ENCODE measurements at regions of chr14 and their contacts with region 1.

Region 1: GRCh38 chr14:70934502-70935134 is 27.4 kb downstream of the PCNX1 start:
- DNase-seq: peak; percentile 34
- ATAC-seq: peak; percentile 90
- H3K4me3 ChIP-seq: peak overlapping the region; percentile 38; the same call in 1 of the 2 replicates
- H3K27ac ChIP-seq: peak overlapping the region; percentile 56
- H3K4me1 ChIP-seq: peaks cover 14% of the 10 kb centered on the region; the same call in 1 of the 2 replicates
- H3K27me3 ChIP-seq: no peaks in the 10 kb centered on the region
- CTCF ChIP-seq: no peak
- EP300 ChIP-seq: no peak
- POLR2A ChIP-seq: no peak
- RAD21 ChIP-seq: no peak

Region 2: GRCh38 chr14:70887207-70887681 is 47.4 kb before region 1 on chr14:
- CTCF ChIA-PET with region 1: interaction called, 5 read pairs
- POLR2A ChIA-PET with region 1: interaction called, 7 read pairs
- RAD21 ChIA-PET with region 1: interaction called, 4 read pairs
- SMC1A ChIA-PET with region 1: interaction called, 10 read pairs
- in situ Hi-C with region 1: no loop called
- intact Hi-C with region 1: no loop called
- DNase-seq: peak; percentile 71
- ATAC-seq: peak; percentile 72
- H3K4me3 ChIP-seq: peak overlapping the region; percentile 56
- H3K27ac ChIP-seq: peak overlapping the region; percentile 98
- H3K4me1 ChIP-seq: peaks cover 65% of the 10 kb centered on the region
- H3K27me3 ChIP-seq: no peaks in the 10 kb centered on the region
- CTCF ChIP-seq: no peak
- EP300 ChIP-seq: peak in 1 of 2 experiments; percentile 54; a peak in 1 of 4 replicates
- POLR2A ChIP-seq: no peak
- RAD21 ChIP-seq: no peak

Region 3: GRCh38 chr14:70919774-70920173 is 14.8 kb before region 1 on chr14:
- CTCF ChIA-PET with region 1: interaction called, 9 read pairs
- POLR2A ChIA-PET with region 1: interaction called, 9 read pairs
- RAD21 ChIA-PET with region 1: interaction called, 6 read pairs
- SMC1A ChIA-PET with region 1: interaction called, 16 read pairs
- in situ Hi-C with region 1: no loop called
- intact Hi-C with region 1: no loop called
- DNase-seq: no peak
- ATAC-seq: no peak
- H3K4me3 ChIP-seq: no peak overlapping the region
- H3K27ac ChIP-seq: no peak overlapping the region
- H3K4me1 ChIP-seq: peaks cover 10% of the 10 kb centered on the region
- H3K27me3 ChIP-seq: no peaks in the 10 kb centered on the region
- CTCF ChIP-seq: no peak
- EP300 ChIP-seq: no peak
- POLR2A ChIP-seq: no peak
- RAD21 ChIP-seq: no peak